ENCODE measurements at regions of chr10 and their contacts with region 1.

Region 1: GRCh38 chr10:60444494-60445064 is 54.9 kb upstream of the ANK3 start:
- DNase-seq: no peak
- ATAC-seq: no peak
- H3K4me3 ChIP-seq: no peak overlapping the region
- H3K27ac ChIP-seq: no peak overlapping the region
- H3K4me1 ChIP-seq: peaks cover 0 to 15% (median 12%) of the 10 kb centered on the region in 12 donors
- H3K27me3 ChIP-seq: no peaks in the 10 kb centered on the region
- CTCF ChIP-seq: peak in 11 of 12 donors; percentile 27 to 74 (median 53)
- POLR2A ChIP-seq: no peak

Region 2: GRCh38 chr10:60351191-60351853 is 93.3 kb before region 1 on chr10:
- intact Hi-C with region 1: no loop called
- DNase-seq: no peak
- ATAC-seq: no peak
- H3K4me3 ChIP-seq: no peak overlapping the region
- H3K27ac ChIP-seq: no peak overlapping the region
- H3K4me1 ChIP-seq: peaks cover 0 to 36% (median 9%) of the 10 kb centered on the region in 12 donors
- H3K27me3 ChIP-seq: no peaks in the 10 kb centered on the region
- CTCF ChIP-seq: no peak
- POLR2A ChIP-seq: no peak

Region 3: GRCh38 chr10:60629332-60629731 is 184.8 kb after region 1 on chr10:
- intact Hi-C with region 1: loop called in 1 of 10 experiments (anchors 5 kb)
- DNase-seq: no peak
- ATAC-seq: no peak
- H3K4me3 ChIP-seq: no peak overlapping the region
- H3K27ac ChIP-seq: no peak overlapping the region
- H3K4me1 ChIP-seq: no peaks in the 10 kb centered on the region
- H3K27me3 ChIP-seq: peaks cover 0 to 7% (median 0%) of the 10 kb centered on the region in 9 donors
- CTCF ChIP-seq: no peak
- POLR2A ChIP-seq: no peak

Region 4: GRCh38 chr10:60646966-60647796 is 202.6 kb after region 1 on chr10:
- intact Hi-C with region 1: loop called (anchors 2 to 5 kb)
- DNase-seq: peak in 1 of 5 donors; percentile 10
- ATAC-seq: peak in 1 of 4 donors; percentile 53
- H3K4me3 ChIP-seq: no peak overlapping the region
- H3K27ac ChIP-seq: no peak overlapping the region
- H3K4me1 ChIP-seq: peaks cover 0 to 3% (median 0%) of the 10 kb centered on the region in 12 donors
- H3K27me3 ChIP-seq: no peaks in the 10 kb centered on the region
- CTCF ChIP-seq: peak; percentile 64 to 83 (median 76)
- POLR2A ChIP-seq: no peak